ENCODE measurements at regions of chr2 and their contacts with region 1.

Region 1: GRCh38 chr2:86079981-86080911 is 25.4 kb downstream of the POLR1A start:
- DNase-seq: peak; percentile 45
- ATAC-seq: peak; percentile 95
- H3K4me3 ChIP-seq: no peak overlapping the region
- H3K27ac ChIP-seq: peak overlapping the region; percentile 26; the same call in 1 of the 2 replicates
- H3K4me1 ChIP-seq: peaks cover 14% of the 10 kb centered on the region
- H3K27me3 ChIP-seq: no peaks in the 10 kb centered on the region
- CTCF ChIP-seq: peak; percentile 80 to 90 (median 82)
- EP300 ChIP-seq: no peak
- POLR2A ChIP-seq: no peak
- RAD21 ChIP-seq: peak; percentile 83

Region 2: DNA sequence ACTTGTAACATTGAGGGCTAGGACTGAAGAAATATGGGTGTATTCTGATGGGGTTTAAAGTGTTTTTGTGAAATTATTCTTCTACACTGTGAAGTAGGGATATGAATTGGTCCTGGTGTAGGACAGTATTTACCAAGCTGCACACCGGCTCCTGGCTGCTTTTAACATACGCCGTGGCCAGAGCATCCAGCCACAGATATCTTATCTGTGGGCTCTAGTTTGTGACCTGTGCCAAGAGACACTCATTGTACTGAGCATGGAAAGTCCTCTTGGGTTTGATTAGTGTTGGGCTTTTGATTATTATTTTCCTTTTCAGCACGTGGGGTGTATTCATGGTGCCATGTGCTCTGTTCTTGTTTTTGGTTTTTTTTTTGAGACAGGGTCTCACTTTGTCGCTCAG is 456.3 kb before region 1 on chr2:
- CTCF ChIA-PET with region 1: no interaction called
- POLR2A ChIA-PET with region 1: no interaction called
- RAD21 ChIA-PET with region 1: no interaction called
- SMC1A ChIA-PET with region 1: no interaction called
- in situ Hi-C with region 1: no loop called
- intact Hi-C with region 1: no loop called
- DNase-seq: no peak
- ATAC-seq: no peak
- H3K4me3 ChIP-seq: no peak overlapping the region
- H3K27ac ChIP-seq: no peak overlapping the region
- H3K4me1 ChIP-seq: no peaks in the 10 kb centered on the region
- H3K27me3 ChIP-seq: no peaks in the 10 kb centered on the region
- CTCF ChIP-seq: no peak
- EP300 ChIP-seq: no peak
- POLR2A ChIP-seq: no peak
- RAD21 ChIP-seq: no peak

Region 3: GRCh38 chr2:85707304-85707703 is 372.9 kb before region 1 on chr2:
- CTCF ChIA-PET with region 1: interaction called, 23 read pairs
- POLR2A ChIA-PET with region 1: no interaction called
- RAD21 ChIA-PET with region 1: interaction called, 3 read pairs
- SMC1A ChIA-PET with region 1: interaction called, 5 read pairs
- in situ Hi-C with region 1: no loop called
- intact Hi-C with region 1: no loop called
- DNase-seq: peak; percentile 75
- ATAC-seq: peak; percentile 79
- H3K4me3 ChIP-seq: no peak overlapping the region
- H3K27ac ChIP-seq: no peak overlapping the region
- H3K4me1 ChIP-seq: peaks cover 21% of the 10 kb centered on the region
- H3K27me3 ChIP-seq: no peaks in the 10 kb centered on the region
- CTCF ChIP-seq: peak; percentile 74 to 83 (median 82)
- EP300 ChIP-seq: 0 out of 4 replicates have a peak, but pooled peaks of 1 of the 2 experiments have one; percentile 34
- POLR2A ChIP-seq: no peak
- RAD21 ChIP-seq: peak; percentile 77

Region 4: DNA sequence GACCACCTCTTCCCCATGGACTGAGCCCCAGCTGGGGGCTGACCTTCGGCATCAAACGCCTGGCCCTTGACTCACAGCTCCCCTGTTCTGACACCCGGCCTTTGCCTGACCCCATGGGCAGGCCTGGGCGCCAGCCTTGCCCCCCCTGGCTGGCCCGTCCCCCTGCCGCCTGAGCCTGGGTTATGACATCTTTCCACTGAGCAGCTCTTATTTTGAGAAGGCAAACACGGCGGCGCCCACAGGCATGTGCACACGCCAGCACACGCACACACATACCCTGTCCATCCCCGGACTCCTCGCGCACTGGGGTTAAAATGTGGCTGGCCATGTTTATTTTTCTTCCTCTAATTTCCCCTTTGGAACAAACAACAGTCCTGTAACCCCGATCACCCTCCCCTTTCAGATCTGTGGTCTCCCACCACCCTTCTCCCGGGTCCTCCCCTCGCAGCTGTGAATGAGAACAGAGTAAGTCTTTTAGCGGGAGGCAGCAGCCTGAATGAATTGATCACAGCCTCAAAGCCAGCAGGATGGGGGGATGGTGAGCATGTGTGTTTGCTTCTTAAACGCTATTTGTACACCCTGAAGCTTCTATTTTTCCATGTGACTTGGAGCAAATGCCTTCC is 338.3 kb before region 1 on chr2:
- CTCF ChIA-PET with region 1: interaction called, 5 read pairs
- POLR2A ChIA-PET with region 1: no interaction called
- RAD21 ChIA-PET with region 1: interaction called, 4 read pairs
- SMC1A ChIA-PET with region 1: interaction called, 3 read pairs
- in situ Hi-C with region 1: loop called (anchors 10 kb)
- intact Hi-C with region 1: no loop called
- DNase-seq: no peak
- ATAC-seq: no peak
- H3K4me3 ChIP-seq: no peak overlapping the region
- H3K27ac ChIP-seq: no peak overlapping the region
- H3K4me1 ChIP-seq: peaks cover 3% of the 10 kb centered on the region; the same call in 1 of the 2 replicates
- H3K27me3 ChIP-seq: peaks cover 0 to 19% of the 10 kb centered on the region in 2 experiments; a peak in 3 of 4 replicates
- CTCF ChIP-seq: no peak
- EP300 ChIP-seq: no peak
- POLR2A ChIP-seq: no peak
- RAD21 ChIP-seq: no peak

Region 5: DNA sequence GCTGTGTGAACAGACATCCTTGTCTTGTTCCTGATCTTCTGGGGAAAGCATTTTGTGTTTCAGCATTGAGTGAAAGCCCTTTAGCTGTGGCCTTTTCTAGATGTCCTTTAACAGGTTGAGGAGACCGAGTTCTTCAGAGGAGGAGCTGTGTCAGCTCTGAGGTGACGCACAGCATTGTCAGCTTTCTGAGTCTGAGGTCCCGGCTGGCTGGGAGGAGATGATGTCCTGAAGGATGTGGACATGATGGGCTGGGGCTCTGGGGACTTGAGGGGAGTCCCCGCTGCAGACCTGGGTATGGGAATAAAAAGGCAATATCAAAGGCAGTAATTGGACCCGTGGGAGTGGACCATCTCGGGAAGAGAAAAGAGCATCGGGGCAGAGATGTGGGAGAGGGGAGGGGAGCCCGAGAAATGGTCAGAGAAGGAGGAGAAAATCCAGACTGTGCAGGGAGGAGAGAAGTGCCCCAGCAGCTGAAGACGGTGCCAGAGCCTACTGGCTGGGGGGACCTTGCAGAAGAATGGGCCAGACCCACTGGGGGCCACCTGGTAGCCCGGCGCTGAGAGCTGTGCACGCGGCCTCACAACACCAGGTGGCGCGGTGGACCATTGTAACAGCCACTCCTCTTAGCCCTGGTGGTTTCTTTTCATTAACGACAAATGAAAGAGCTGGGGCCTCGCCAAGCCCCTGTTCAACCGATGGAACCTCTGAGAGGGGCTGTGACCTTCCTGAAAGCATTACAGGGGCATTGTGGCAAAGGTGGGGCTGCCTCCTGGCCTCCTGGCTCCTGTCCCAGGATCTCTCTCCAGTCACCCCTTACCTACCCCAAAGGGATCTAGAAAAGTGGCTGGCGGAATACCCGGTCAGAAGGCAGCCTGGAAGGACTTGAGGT is 253.0 kb before region 1 on chr2:
- CTCF ChIA-PET with region 1: interaction called, 458 read pairs
- POLR2A ChIA-PET with region 1: interaction called, 10 read pairs
- RAD21 ChIA-PET with region 1: interaction called, 214 read pairs
- SMC1A ChIA-PET with region 1: interaction called, 286 read pairs
- in situ Hi-C with region 1: loop called (anchors 5 kb)
- intact Hi-C with region 1: loop called (anchors 1 kb)
- DNase-seq: no peak
- ATAC-seq: peak; percentile 98
- H3K4me3 ChIP-seq: no peak overlapping the region
- H3K27ac ChIP-seq: no peak overlapping the region
- H3K4me1 ChIP-seq: no peaks in the 10 kb centered on the region
- H3K27me3 ChIP-seq: no peaks in the 10 kb centered on the region; a peak in 1 of 4 replicates
- CTCF ChIP-seq: peak; percentile 77 to 89 (median 88); a peak in 5 of 6 replicates
- EP300 ChIP-seq: no peak
- POLR2A ChIP-seq: no peak
- RAD21 ChIP-seq: peak; percentile 85

Region 6: GRCh38 chr2:85865539-85866164 is 214.6 kb before region 1 on chr2:
- CTCF ChIA-PET with region 1: interaction called, 10 read pairs
- POLR2A ChIA-PET with region 1: no interaction called
- RAD21 ChIA-PET with region 1: interaction called, 3 read pairs
- SMC1A ChIA-PET with region 1: interaction called, 10 read pairs
- in situ Hi-C with region 1: no loop called
- intact Hi-C with region 1: no loop called
- DNase-seq: peak; percentile 62
- ATAC-seq: peak; percentile 90
- H3K4me3 ChIP-seq: no peak overlapping the region; the same call in 1 of the 2 replicates
- H3K27ac ChIP-seq: no peak overlapping the region
- H3K4me1 ChIP-seq: peaks cover 24% of the 10 kb centered on the region
- H3K27me3 ChIP-seq: no peaks in the 10 kb centered on the region
- CTCF ChIP-seq: no peak
- EP300 ChIP-seq: peak in 1 of 2 experiments; percentile 58; a peak in 1 of 4 replicates
- POLR2A ChIP-seq: no peak
- RAD21 ChIP-seq: peak; percentile 7; the same call in 1 of the 2 replicates

Region 7: DNA sequence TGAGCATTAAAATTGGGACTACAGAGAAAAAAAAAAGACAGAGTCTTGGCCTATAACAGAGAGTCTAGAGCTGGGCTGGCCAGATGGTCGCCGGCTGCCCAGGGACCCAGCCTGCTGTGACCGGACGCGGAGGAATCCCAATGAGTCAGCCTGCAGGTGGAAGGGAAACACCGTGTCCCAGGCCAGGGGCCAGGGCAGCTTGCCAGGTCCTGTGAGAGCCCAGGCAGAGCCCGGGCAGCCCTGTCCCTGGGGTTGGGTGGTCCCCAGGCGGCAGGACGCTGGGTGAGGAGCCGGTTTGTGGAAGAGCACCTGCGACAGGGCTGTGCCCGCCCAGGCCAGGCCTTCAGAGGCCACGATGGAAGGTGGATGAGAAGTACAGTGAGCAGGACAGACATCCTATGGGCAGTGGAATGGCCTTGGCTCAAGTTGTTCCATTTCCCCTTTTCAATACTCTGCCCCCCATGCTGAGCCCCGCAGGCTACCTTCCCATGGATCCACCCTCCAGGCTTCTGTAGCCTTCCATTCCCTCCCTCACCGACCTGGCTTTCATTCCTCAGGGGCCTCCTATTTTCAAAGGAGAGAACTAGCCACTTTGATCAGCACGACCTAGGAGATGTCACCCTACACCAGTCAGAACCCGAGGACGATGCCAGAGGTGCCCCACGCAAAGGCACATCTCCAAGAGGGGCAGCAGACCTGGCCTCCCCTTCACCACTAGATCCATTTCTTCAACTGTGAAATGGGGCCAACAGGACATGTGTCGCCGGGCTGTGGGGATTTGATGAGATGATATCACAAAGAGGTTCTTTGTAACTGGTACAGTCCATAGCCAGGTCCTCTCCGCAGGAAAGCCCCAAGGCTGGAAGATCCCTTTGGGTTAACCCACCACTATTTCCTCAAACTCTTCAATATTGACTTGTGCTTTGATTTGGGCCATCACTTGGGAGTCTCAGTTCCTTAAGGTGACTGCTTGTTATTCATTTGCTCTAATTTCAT is 62.0 kb before region 1 on chr2:
- CTCF ChIA-PET with region 1: interaction called, 43 read pairs
- POLR2A ChIA-PET with region 1: no interaction called
- RAD21 ChIA-PET with region 1: interaction called, 16 read pairs
- SMC1A ChIA-PET with region 1: interaction called, 45 read pairs
- in situ Hi-C with region 1: no loop called
- intact Hi-C with region 1: no loop called
- DNase-seq: no peak
- ATAC-seq: peak; percentile 71
- H3K4me3 ChIP-seq: no peak overlapping the region
- H3K27ac ChIP-seq: peak overlapping the region; percentile 60
- H3K4me1 ChIP-seq: peaks cover 20% of the 10 kb centered on the region
- H3K27me3 ChIP-seq: no peaks in the 10 kb centered on the region
- CTCF ChIP-seq: no peak
- EP300 ChIP-seq: peak; percentile 22 to 68; a peak in 1 of 4 replicates
- POLR2A ChIP-seq: no peak
- RAD21 ChIP-seq: no peak

Region 8: DNA sequence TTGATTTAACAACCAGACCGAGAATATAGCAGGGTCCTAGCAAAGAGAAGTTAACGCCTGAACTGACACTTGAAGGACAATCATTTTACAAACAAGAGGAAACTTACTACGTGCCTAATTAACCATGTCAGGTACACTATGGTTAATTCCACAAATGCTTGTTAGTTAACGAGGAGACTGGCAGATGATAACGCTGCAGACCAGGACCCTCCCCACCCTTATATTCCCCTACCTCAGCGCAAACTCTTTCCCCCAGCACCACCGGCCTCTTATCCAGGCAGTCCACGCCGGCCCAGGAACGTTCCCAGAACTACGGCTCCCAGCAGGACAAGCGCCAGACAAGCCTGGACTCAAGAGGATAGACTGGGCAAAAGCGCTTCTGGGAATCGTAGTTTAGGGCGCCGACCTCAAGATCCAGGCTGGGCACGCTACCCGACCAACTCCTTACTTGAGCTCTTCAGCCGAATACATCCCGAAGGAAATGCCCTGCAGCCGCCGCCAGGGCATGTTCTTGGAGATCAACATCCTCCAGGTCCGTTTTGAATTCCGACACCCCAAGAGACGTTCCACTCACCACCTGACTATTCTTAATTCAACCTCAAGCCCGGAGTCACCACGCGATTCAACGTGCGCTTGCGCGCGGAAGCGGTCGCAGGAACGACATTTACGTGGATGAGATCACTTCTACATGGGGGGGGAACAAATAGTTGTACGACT is 25.2 kb after region 1 on chr2 and contains the start of gene POLR1A:
- CTCF ChIA-PET with region 1: interaction called, 23 read pairs
- POLR2A ChIA-PET with region 1: interaction called, 5 read pairs
- RAD21 ChIA-PET with region 1: interaction called, 16 read pairs
- SMC1A ChIA-PET with region 1: interaction called, 12 read pairs
- in situ Hi-C with region 1: no loop called
- intact Hi-C with region 1: no loop called
- DNase-seq: no peak
- ATAC-seq: peak; percentile 90
- H3K4me3 ChIP-seq: peak within 1 kb of the TSS; percentile 88
- H3K27ac ChIP-seq: peak within 1 kb of the TSS; percentile 91
- H3K4me1 ChIP-seq: no peaks in the 10 kb centered on the region
- H3K27me3 ChIP-seq: no peaks in the 10 kb centered on the region
- CTCF ChIP-seq: no peak
- EP300 ChIP-seq: no peak
- POLR2A ChIP-seq: no peak
- RAD21 ChIP-seq: no peak
- polyA plus RNA-seq, gene POLR1A: 2.1 to 6.1 TPM

Measured in GM12878 (cell line).